A549 (cell line): ENCODE measurements at regions of chr2 and their contacts with region 1.

Region 1: GRCh38 chr2:181466661-181467576 is 9.7 kb downstream of the ITGA4 start:
- DNase-seq: peak in 1 of 2 experiments; percentile 51
- ATAC-seq: peak in 1 of 2 experiments; percentile 62; a peak in 2 of 6 replicates
- H3K4me3 ChIP-seq: no peak overlapping the region
- H3K27ac ChIP-seq: no peak overlapping the region
- H3K4me1 ChIP-seq: no peaks in the 10 kb centered on the region
- CTCF ChIP-seq: peak; percentile 79
- EP300 ChIP-seq: no peak
- POLR2A ChIP-seq: no peak
- RAD21 ChIP-seq: peak; percentile 52 to 58; a peak in 4 of 5 replicates

Region 2: DNA sequence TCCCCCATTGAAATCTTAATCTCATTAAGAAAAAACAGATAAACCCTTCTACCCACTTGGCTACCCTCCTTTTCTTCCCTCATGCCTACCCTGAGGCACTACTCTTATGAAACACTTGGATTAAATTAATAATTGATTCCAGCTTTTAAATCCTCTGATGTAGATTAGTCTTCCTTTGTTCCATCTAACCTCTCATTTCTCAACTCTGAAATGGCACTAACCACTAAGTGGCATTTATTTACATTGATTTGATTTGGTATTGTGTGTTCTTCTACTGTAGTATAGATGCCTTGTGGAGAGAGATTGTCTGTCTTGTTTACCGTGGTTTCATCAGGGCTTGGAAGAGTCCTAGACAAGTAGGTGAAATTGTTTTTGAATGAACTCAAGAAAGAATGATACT is 17.0 kb after region 1 on chr2:
- CTCF ChIA-PET with region 1: interaction called, 18 read pairs
- POLR2A ChIA-PET with region 1: no interaction called
- DNase-seq: no peak
- ATAC-seq: no peak
- H3K4me3 ChIP-seq: no peak overlapping the region
- H3K27ac ChIP-seq: no peak overlapping the region
- H3K4me1 ChIP-seq: no peaks in the 10 kb centered on the region
- CTCF ChIP-seq: no peak
- EP300 ChIP-seq: no peak
- POLR2A ChIP-seq: no peak
- RAD21 ChIP-seq: no peak

Region 3: GRCh38 chr2:181517685-181518301 is 50.9 kb after region 1 on chr2:
- CTCF ChIA-PET with region 1: no interaction called
- POLR2A ChIA-PET with region 1: no interaction called
- DNase-seq: no peak
- ATAC-seq: no peak
- H3K4me3 ChIP-seq: no peak overlapping the region
- H3K27ac ChIP-seq: no peak overlapping the region
- H3K4me1 ChIP-seq: no peaks in the 10 kb centered on the region
- CTCF ChIP-seq: no peak
- EP300 ChIP-seq: no peak
- POLR2A ChIP-seq: no peak
- RAD21 ChIP-seq: no peak